ENCODE measurements at regions of chr9 and their contacts with region 1.

Region 1: GRCh38 chr9:20593551-20593950 is 28.7 kb downstream of the MLLT3 start:
- DNase-seq: no peak
- H3K4me3 ChIP-seq: no peak overlapping the region
- H3K27ac ChIP-seq: no peak overlapping the region
- H3K4me1 ChIP-seq: peaks cover 0 to 3% (median 0%) of the 10 kb centered on the region in 4 experiments; a peak in 1 of 7 replicates
- H3K27me3 ChIP-seq: no peaks in the 10 kb centered on the region
- CTCF ChIP-seq: no peak
- EP300 ChIP-seq: no peak
- POLR2A ChIP-seq: no peak
- RAD21 ChIP-seq: no peak

Region 2: DNA sequence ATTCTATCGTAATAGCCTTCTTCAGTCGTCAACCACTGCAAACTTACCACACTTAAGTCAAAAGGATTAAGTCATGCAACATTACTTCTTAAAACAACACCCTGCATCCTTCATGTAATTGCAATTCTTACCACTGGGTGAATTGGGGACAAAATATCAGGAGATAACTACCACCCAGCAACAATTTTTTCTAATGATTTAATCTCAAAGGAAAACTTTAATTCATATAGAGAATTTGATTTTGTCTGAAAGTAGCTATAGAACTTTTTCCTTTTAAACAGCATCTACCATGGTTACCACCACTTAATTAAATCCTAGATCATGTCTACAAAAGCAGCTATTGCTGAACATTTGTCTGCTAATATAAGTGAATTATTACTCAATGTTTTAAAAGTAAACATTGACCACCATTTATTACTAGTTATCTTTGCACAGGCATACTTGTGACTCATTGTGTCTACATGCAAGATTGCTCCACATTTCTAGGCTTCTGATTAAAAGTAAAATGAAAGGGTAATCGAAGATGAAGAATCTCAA is 18.3 kb after region 1 on chr9:
- CTCF ChIA-PET with region 1: interaction called, 11 read pairs
- POLR2A ChIA-PET with region 1: interaction called, 3 read pairs
- DNase-seq: no peak
- H3K4me3 ChIP-seq: no peak overlapping the region
- H3K27ac ChIP-seq: no peak overlapping the region
- H3K4me1 ChIP-seq: no peaks in the 10 kb centered on the region
- H3K27me3 ChIP-seq: no peaks in the 10 kb centered on the region
- CTCF ChIP-seq: peak in 1 of 3 experiments; percentile 35; a peak in 2 of 4 replicates
- EP300 ChIP-seq: no peak
- POLR2A ChIP-seq: no peak
- RAD21 ChIP-seq: peak in 1 of 2 experiments; percentile 16; a peak in 2 of 4 replicates

Region 3: GRCh38 chr9:20630241-20630943 is 36.8 kb after region 1 on chr9:
- CTCF ChIA-PET with region 1: no interaction called
- POLR2A ChIA-PET with region 1: no interaction called
- DNase-seq: no peak
- H3K4me3 ChIP-seq: no peak overlapping the region
- H3K27ac ChIP-seq: no peak overlapping the region
- H3K4me1 ChIP-seq: peaks cover 0 to 4% (median 2%) of the 10 kb centered on the region in 4 experiments; a peak in 2 of 7 replicates
- H3K27me3 ChIP-seq: no peaks in the 10 kb centered on the region
- CTCF ChIP-seq: no peak
- EP300 ChIP-seq: no peak
- POLR2A ChIP-seq: no peak
- RAD21 ChIP-seq: no peak